Posterior vena cava (tissue), 2 donors: ENCODE measurements at regions of chr2 and their contacts with region 1.

Region 1: GRCh38 chr2:127874378-127875271 is 11.1 kb downstream of the AMMECR1L start:
- DNase-seq: no peak

Region 2: GRCh38 chr2:128090945-128091725 is 216.5 kb after region 1 on chr2 and contains the start of gene UGGT1:
- intact Hi-C with region 1: loop called in 1 of 2 experiments (anchors 10 kb)
- DNase-seq: peak; percentile 99
- total RNA-seq, gene UGGT1: 43.0 to 51.0 TPM